ENCODE measurements at regions of chr1 and their contacts with region 1.

Region 1: DNA sequence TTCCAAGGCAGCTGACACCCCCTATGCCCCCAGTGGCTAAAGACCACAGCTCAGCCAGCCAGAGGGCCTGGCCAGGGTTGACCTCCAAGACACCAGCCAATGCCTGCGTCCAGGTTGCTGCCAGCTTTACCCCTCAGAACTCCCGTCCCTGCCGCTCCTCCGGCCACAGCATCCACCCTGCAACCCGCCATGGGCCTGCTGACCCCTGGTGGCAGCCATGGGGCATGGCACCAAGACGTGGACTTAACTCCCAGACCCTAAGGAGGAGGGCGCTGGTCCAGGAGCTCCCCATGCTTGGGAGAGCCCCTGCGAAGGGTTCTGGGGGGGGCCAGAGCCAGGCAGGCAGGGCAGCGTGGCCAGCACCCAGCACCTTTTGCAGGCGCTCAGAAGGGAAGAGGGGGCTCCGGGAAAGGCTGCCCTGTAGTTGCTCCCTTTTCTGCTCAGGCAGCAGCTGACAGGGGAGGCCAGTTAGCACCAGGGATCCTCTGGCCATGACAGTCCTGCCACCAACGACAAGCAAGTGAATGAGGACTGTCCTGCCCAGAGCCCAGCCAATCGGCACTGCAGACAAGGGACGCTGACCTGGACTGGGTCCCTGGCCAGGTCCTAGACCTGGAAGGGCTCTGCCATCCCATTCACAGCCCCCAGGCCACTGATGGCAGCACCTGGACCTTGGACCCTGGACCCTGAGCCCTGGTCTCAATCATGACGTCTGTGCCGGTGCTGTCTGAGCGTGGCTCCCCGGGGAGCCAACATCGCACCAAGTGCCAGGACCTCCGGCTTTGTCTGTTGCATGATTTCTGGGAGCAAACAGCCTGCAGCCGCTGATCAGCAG is 246.2 kb downstream of the NPHP4 start:
- DNase-seq: peak; percentile 1 to 28 (median 7)
- H3K4me3 ChIP-seq: no peak overlapping the region
- H3K4me3 Mint-ChIP-seq: no peak overlapping the region
- H3K27ac ChIP-seq: no peak overlapping the region
- H3K27ac Mint-ChIP-seq: no peak overlapping the region
- H3K4me1 ChIP-seq: no peaks in the 10 kb centered on the region
- H3K4me1 Mint-ChIP-seq: peaks cover 2% of the 10 kb centered on the region
- H3K27me3 ChIP-seq: no peaks in the 10 kb centered on the region
- H3K27me3 Mint-ChIP-seq: peaks cover 2 to 6% (median 3%) of the 10 kb centered on the region in 3 donors
- CTCF ChIP-seq: peak; percentile 88

Region 2: GRCh38 chr1:3910857-3911845 is 1834.8 kb before region 1 on chr1:
- intact Hi-C with region 1: loop called in 1 of 2 experiments (anchors 10 kb)
- DNase-seq: peak in 2 of 3 donors; percentile 20 to 29
- H3K4me3 ChIP-seq: no peak overlapping the region
- H3K4me3 Mint-ChIP-seq: no peak overlapping the region
- H3K27ac ChIP-seq: no peak overlapping the region
- H3K27ac Mint-ChIP-seq: no peak overlapping the region
- H3K4me1 ChIP-seq: peaks cover 2 to 4% of the 10 kb centered on the region in 2 donors
- H3K4me1 Mint-ChIP-seq: peaks cover 10% of the 10 kb centered on the region
- H3K27me3 ChIP-seq: peaks cover 0 to 11% of the 10 kb centered on the region in 2 donors
- H3K27me3 Mint-ChIP-seq: peaks cover 23 to 32% (median 27%) of the 10 kb centered on the region in 3 donors
- CTCF ChIP-seq: peak; percentile 56

Region 3: GRCh38 chr1:5514519-5515183 is 231.3 kb before region 1 on chr1:
- intact Hi-C with region 1: loop called (anchors 5 to 10 kb)
- DNase-seq: peak; percentile 18 to 48 (median 40)
- H3K4me3 ChIP-seq: no peak overlapping the region
- H3K4me3 Mint-ChIP-seq: no peak overlapping the region
- H3K27ac ChIP-seq: no peak overlapping the region
- H3K27ac Mint-ChIP-seq: no peak overlapping the region
- H3K4me1 ChIP-seq: peaks cover 4 to 6% of the 10 kb centered on the region in 2 donors
- H3K4me1 Mint-ChIP-seq: peaks cover 6% of the 10 kb centered on the region
- H3K27me3 ChIP-seq: no peaks in the 10 kb centered on the region
- H3K27me3 Mint-ChIP-seq: peaks cover 4 to 7% (median 5%) of the 10 kb centered on the region in 3 donors
- CTCF ChIP-seq: peak; percentile 100